ENCODE measurements at regions of chr17 and their contacts with region 1.

Region 1: GRCh38 chr17:20095336-20096080 is 86.3 kb downstream of the SPECC1 start:
- DNase-seq: peak; percentile 13
- ATAC-seq: peak; percentile 69
- H3K4me3 ChIP-seq: no peak overlapping the region
- H3K27ac ChIP-seq: no peak overlapping the region
- H3K4me1 ChIP-seq: no peaks in the 10 kb centered on the region
- H3K27me3 ChIP-seq: peaks cover 38% of the 10 kb centered on the region
- CTCF ChIP-seq: 0 out of 2 replicates have a peak, but pooled peaks have one; percentile 19
- POLR2A ChIP-seq: no peak
- RAD21 ChIP-seq: no peak

Region 2: DNA sequence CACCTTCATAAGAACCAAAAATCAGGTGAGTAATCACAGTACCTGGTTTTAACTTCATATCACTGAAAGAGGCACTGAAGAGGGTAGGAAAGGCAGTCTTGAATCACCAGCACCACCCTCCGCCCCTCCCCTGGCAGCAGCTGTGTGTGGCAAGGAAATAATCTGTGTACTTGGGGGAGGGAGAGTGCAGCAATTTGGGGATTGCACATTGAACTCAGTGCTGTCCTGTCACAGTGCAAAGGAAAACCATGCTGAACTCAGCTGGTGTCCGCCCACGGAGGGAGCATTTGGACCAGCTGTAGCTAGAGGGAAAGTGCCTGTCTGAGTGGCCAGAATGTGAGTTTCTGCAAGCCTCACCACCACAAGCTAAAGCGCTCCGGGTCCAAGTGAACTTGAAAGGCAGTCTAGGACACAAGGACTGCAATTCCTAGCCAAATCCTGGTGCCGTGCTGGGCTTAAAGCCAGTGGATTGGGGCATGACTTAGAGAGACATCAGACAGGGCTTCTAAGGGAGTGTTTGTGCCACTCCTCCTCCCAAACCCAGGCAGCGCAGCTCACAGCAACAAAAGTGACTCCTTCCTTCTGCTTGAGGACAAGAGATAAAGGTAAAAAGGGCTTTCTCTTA is 307.7 kb before region 1 on chr17:
- CTCF ChIA-PET with region 1: no interaction called
- POLR2A ChIA-PET with region 1: no interaction called
- dilution Hi-C with region 1: no loop called
- in situ Hi-C with region 1: no loop called
- intact Hi-C with region 1: no loop called
- DNase-seq: peak; percentile 6
- ATAC-seq: peak; percentile 32; the same call in 1 of the 2 replicates
- H3K4me3 ChIP-seq: no peak overlapping the region
- H3K27ac ChIP-seq: no peak overlapping the region
- H3K4me1 ChIP-seq: no peaks in the 10 kb centered on the region
- H3K27me3 ChIP-seq: no peaks in the 10 kb centered on the region
- CTCF ChIP-seq: no peak
- POLR2A ChIP-seq: no peak
- RAD21 ChIP-seq: no peak

Region 3: GRCh38 chr17:20206068-20206467 is 110.6 kb after region 1 on chr17:
- CTCF ChIA-PET with region 1: no interaction called
- POLR2A ChIA-PET with region 1: no interaction called
- dilution Hi-C with region 1: no loop called
- in situ Hi-C with region 1: no loop called
- intact Hi-C with region 1: no loop called
- DNase-seq: no peak
- ATAC-seq: peak; percentile 41
- H3K4me3 ChIP-seq: no peak overlapping the region
- H3K27ac ChIP-seq: no peak overlapping the region; the same call in 1 of the 2 replicates
- H3K4me1 ChIP-seq: peaks cover 26% of the 10 kb centered on the region
- H3K27me3 ChIP-seq: no peaks in the 10 kb centered on the region
- CTCF ChIP-seq: no peak
- POLR2A ChIP-seq: no peak
- RAD21 ChIP-seq: no peak

Region 4: GRCh38 chr17:20264996-20265395 is 169.5 kb after region 1 on chr17:
- CTCF ChIA-PET with region 1: interaction called, 10 read pairs
- POLR2A ChIA-PET with region 1: no interaction called
- dilution Hi-C with region 1: no loop called
- in situ Hi-C with region 1: no loop called
- intact Hi-C with region 1: no loop called
- DNase-seq: no peak
- ATAC-seq: no peak
- H3K4me3 ChIP-seq: no peak overlapping the region
- H3K27ac ChIP-seq: no peak overlapping the region
- H3K4me1 ChIP-seq: peaks cover 15% of the 10 kb centered on the region
- H3K27me3 ChIP-seq: no peaks in the 10 kb centered on the region
- CTCF ChIP-seq: no peak
- POLR2A ChIP-seq: no peak
- RAD21 ChIP-seq: no peak

Region 5: DNA sequence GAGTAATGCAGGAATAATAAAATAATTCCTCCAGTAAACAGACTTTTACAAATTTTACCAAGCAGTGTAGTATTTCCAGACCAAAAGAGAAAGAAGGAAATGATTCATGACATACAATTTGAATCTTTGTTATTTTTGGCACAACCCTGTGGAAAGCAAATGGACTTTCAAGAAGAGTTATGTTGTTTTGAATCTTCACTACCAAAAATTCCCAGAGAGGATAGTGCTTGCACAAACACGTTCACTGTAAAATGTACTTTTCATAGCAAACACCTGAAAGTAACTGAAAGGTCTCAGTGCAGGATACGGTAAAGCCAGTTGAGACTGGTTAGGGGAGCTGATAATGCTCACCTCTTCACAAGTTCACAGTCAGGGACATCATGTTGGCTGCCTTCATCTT is 840.2 kb after region 1 on chr17:
- CTCF ChIA-PET with region 1: no interaction called
- POLR2A ChIA-PET with region 1: no interaction called
- dilution Hi-C with region 1: no loop called
- in situ Hi-C with region 1: no loop called
- intact Hi-C with region 1: no loop called
- DNase-seq: peak; percentile 75
- ATAC-seq: peak; percentile 52
- H3K4me3 ChIP-seq: no peak overlapping the region
- H3K27ac ChIP-seq: no peak overlapping the region
- H3K4me1 ChIP-seq: peaks cover 3% of the 10 kb centered on the region
- H3K27me3 ChIP-seq: no peaks in the 10 kb centered on the region; the same call in 1 of the 2 replicates
- CTCF ChIP-seq: no peak
- POLR2A ChIP-seq: no peak
- RAD21 ChIP-seq: no peak